Activated T-helper 1 cell treated with anti-CD3 and anti-CD28 coated beads, Interleukin-12 subunit alpha, Interleukin-12 subunit beta, Interleukin-2, Interleukin-4 antibody, amounts not matched to agents 30 ng/mL and 10 ng/mL and 1 ng/mL, durations not matched to agents 14 hours and 24 hours and 36 hours (primary cell): ENCODE measurements at regions of chrX and their contacts with region 1.

Region 1: GRCh38 chrX:40169193-40170101 is 71.7 kb upstream of the BCOR start:
- DNase-seq: peak; percentile 73
- H3K4me3 Mint-ChIP-seq: peak overlapping the region; percentile 88
- H3K27ac Mint-ChIP-seq: peak overlapping the region; percentile 96
- H3K4me1 Mint-ChIP-seq: peaks cover 62% of the 10 kb centered on the region
- H3K27me3 Mint-ChIP-seq: no peaks in the 10 kb centered on the region

Region 2: DNA sequence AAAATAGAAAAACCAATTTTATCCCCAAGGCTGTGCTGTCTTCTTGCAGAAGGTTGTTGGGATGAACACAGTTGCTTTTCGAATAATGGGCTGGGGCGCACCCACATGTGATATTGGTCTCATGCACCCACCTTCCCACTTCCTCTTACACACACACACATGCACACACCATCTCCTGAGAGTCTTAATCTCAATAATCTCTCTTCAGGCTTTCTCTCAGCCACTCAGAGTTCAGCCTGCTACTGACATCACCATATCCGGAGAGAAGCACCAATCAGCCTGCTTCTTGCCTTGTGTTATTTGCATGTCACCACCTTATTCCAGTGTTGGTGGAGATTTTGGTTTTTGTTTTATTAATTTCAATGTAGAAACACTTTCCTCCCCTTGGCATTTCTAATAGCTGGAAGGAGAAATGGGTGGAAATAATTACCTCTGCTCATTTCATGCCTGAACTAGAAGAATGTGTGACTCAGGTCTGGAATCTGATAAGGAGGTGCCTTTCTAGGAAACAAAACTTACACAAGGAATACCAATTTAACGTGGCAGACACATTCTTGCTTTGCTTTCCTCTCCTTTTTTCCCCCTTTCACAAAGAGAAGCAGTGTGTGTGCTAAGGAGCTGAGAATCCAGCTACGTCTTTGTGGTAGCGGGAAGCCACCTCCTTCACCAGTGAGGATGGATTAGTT is 968.0 kb before region 1 on chrX:
- intact Hi-C with region 1: loop called (anchors 10 kb)
- DNase-seq: no peak
- H3K4me3 Mint-ChIP-seq: no peak overlapping the region
- H3K27ac Mint-ChIP-seq: peak overlapping the region; percentile 79
- H3K4me1 Mint-ChIP-seq: peaks cover 82% of the 10 kb centered on the region
- H3K27me3 Mint-ChIP-seq: no peaks in the 10 kb centered on the region

Region 3: DNA sequence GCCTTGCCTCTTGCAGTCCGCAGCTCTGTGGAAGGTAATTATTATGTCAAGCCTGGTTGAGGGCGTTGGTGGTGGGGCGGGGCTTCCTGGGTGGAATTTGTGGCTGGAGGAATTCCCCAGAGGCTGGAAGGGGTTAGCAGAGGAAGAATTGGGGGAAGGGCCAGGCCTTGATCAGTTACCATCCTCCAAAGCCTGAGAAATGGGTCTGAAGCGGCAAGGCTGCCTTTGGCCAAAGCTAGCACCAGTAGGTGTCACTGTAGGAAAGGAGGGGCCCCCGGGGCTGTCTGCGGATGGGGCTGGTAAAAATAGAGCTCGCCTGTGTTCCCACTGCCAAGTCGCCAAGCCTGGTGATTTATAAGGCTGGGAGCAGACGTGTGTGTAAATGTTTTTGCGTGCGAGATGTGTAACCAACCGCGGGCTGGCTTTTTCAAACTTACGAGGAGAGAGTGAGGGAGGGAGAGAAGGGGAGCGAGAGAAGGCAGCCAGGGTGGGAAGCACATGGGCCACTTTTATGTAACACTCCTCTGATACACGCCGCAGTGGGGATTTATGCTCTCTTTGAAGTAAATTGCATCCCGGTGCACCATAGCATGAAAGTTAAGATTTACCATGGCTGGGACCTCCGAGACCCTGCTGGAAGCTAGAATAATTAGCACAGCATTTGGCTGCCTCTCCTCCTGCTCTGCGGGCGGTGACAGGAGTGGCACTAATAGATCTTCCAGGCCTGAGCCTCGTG is 438.6 kb before region 1 on chrX:
- intact Hi-C with region 1: loop called (anchors 5 kb)
- DNase-seq: peak; percentile 31
- H3K4me3 Mint-ChIP-seq: peak overlapping the region; percentile 54
- H3K27ac Mint-ChIP-seq: peak overlapping the region; percentile 84
- H3K4me1 Mint-ChIP-seq: peaks cover 30% of the 10 kb centered on the region
- H3K27me3 Mint-ChIP-seq: no peaks in the 10 kb centered on the region

Region 4: DNA sequence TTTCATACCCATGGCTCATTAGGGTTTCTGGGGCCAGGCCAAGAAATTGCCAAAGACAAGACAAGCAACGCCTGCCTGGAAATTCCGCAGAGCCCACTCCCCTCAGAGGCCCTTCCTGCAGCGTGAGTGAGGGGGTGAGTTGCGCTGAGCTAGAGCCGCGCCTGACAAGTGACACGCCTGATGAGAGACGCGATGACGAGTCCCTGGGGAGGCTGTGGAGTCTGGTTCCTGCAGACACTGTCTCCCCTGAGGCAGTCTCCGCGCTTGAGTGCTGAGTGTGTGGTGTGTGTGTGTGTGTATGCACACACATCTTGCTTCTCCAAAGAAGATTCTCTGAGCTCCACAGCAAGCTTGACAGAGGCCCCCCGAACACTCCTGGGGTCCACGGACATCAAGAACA is 341.5 kb before region 1 on chrX:
- intact Hi-C with region 1: no loop called
- DNase-seq: no peak
- H3K4me3 Mint-ChIP-seq: no peak overlapping the region
- H3K27ac Mint-ChIP-seq: no peak overlapping the region
- H3K4me1 Mint-ChIP-seq: peaks cover 9% of the 10 kb centered on the region
- H3K27me3 Mint-ChIP-seq: peaks cover 2% of the 10 kb centered on the region

Region 5: DNA sequence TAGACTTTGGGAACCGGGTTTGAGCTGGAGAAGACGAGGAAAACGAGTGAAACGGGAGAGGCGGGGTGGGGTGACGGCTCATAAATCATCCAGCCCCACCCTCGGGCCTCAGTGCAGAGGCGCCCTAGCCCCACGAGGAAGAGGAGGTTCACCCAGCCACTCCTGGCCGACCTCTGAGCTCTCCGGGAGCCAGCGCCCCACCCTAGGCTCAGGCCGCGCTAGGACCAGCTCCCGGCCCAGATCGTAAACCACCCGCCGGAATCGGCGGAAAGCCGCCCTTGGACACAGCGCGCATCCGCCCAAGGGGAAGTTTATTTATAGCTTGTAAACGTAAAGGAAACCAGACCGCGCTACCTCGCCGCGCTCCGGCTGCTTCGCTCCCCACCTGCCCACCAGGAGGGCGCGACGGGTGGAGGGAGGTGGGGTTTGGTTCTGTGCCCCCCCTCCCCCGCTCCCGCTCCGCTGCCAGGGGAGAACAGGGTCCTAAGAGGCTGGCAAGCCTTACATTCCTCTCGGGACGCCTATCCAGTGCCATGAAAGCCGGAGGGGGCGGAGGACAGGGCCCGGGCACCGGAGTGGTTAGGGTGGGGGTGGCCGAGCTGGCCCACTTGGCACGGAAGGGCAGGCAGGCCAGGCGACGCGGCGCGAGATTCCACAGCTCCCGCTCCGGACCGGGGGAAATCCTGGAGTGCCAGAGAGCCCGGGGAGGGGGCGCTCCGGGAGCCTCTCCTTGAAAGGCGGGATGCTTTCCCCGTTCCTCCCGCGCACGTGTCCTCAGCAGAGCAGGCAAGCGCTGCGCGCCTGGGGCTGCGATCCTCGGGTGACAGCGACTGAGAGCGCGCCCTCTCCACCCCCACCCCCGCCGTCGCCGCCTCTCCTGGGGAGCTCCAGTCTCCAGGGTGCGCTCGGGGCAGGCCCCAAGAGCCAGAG is 155.9 kb before region 1 on chrX:
- intact Hi-C with region 1: loop called (anchors 1 kb)
- DNase-seq: peak; percentile 43
- H3K4me3 Mint-ChIP-seq: peak overlapping the region; percentile 74
- H3K27ac Mint-ChIP-seq: peak overlapping the region; percentile 75
- H3K4me1 Mint-ChIP-seq: peaks cover 11% of the 10 kb centered on the region
- H3K27me3 Mint-ChIP-seq: peaks cover 6% of the 10 kb centered on the region

Region 6: DNA sequence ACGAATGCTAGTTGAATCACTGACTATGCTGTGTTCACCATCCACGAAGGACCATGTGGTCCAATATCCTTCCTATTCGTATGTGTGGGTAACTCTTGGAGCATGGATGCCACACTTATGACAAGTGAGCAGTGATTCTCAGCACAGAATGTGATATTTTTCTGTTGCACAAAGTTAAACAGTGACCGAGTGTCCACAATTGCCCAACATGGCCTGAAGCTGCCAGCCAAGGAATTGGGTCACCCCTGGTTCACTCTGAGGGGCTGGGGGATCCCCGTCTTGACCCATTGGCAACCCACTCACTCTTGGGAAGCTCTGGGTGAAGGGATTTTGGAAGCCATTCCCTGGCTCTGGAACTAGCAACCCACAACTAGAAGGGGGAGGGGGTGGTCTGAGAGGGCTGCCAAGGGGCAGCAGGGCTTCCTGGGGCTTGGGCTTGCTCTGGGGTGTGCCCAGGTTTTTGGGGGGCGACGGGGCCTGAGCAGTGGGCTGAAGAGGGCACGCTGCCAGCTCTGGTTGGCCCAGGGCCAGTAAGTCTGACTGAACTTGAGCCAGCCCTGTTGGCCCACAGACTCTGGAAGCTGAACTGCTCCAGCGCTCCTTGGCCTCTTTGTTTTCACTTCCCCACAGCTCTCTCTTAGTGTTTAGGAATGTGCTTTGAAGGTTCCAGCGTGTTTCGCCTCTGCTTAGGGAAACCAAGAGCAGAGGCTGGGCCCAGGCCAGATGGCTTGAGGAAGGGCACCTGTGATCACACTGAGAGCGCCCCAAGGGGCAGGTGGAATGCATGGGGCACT is 28.5 kb before region 1 on chrX:
- intact Hi-C with region 1: no loop called
- DNase-seq: no peak
- H3K4me3 Mint-ChIP-seq: no peak overlapping the region
- H3K27ac Mint-ChIP-seq: no peak overlapping the region
- H3K4me1 Mint-ChIP-seq: no peaks in the 10 kb centered on the region
- H3K27me3 Mint-ChIP-seq: peaks cover 2% of the 10 kb centered on the region

Region 7: GRCh38 chrX:40153335-40154249 is 15.9 kb before region 1 on chrX:
- intact Hi-C with region 1: loop called (anchors 1 kb)
- DNase-seq: peak; percentile 40
- H3K4me3 Mint-ChIP-seq: peak overlapping the region; percentile 81
- H3K27ac Mint-ChIP-seq: peak overlapping the region; percentile 86
- H3K4me1 Mint-ChIP-seq: peaks cover 12% of the 10 kb centered on the region
- H3K27me3 Mint-ChIP-seq: peaks cover under 1% of the 10 kb centered on the region

Region 8: GRCh38 chrX:40207626-40208025 is 38.2 kb after region 1 on chrX:
- intact Hi-C with region 1: loop called (anchors 5 kb)
- DNase-seq: peak; percentile 1
- H3K4me3 Mint-ChIP-seq: no peak overlapping the region
- H3K27ac Mint-ChIP-seq: no peak overlapping the region
- H3K4me1 Mint-ChIP-seq: peaks cover 8% of the 10 kb centered on the region
- H3K27me3 Mint-ChIP-seq: no peaks in the 10 kb centered on the region